Heart left ventricle (tissue), 16 donors: ENCODE measurements at regions of chr18 and their contacts with region 1.

Region 1: DNA sequence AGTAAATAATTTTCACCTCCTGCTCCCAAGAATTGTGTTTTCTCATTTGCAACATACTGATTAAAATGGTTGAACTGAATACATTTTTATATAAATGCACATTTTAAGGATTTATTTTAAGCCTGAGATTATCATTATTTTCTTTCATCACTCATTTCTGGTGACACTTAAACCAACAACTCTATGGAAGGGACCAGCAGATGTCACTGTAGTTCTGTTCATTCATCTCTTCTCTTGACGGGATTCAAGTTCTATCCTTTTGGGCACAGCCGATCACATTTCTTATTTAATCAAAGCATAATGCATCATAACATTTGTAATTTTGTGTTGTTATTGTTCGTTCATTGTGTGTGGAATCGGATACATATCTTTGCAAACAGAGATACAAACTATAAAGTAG is 417.9 kb downstream of the HRH4 start:
- DNase-seq: peak in 1 of 5 donors; percentile 19
- ATAC-seq: peak; percentile 47 to 71 (median 58)
- H3K4me3 ChIP-seq: no peak overlapping the region
- H3K27ac ChIP-seq: no peak overlapping the region
- H3K4me1 ChIP-seq: peaks cover 0 to 5% (median 0%) of the 10 kb centered on the region in 12 donors
- H3K27me3 ChIP-seq: no peaks in the 10 kb centered on the region
- CTCF ChIP-seq: peak; percentile 35 to 80 (median 66)
- POLR2A ChIP-seq: no peak

Region 2: GRCh38 chr18:25230658-25231326 is 352.5 kb after region 1 on chr18:
- intact Hi-C with region 1: loop called in 3 of 10 experiments (anchors 10 kb)
- DNase-seq: peak; percentile 72 to 85 (median 79)
- ATAC-seq: peak; percentile 75 to 92 (median 87)
- H3K4me3 ChIP-seq: peak overlapping the region in 3 of 12 donors; percentile 2 to 27 (median 3)
- H3K27ac ChIP-seq: peak overlapping the region; percentile 43 to 74 (median 64)
- H3K4me1 ChIP-seq: peaks cover 6 to 73% (median 46%) of the 10 kb centered on the region in 12 donors
- H3K27me3 ChIP-seq: no peaks in the 10 kb centered on the region
- CTCF ChIP-seq: no peak
- POLR2A ChIP-seq: no peak

Region 3: GRCh38 chr18:25360301-25360899 is 482.1 kb after region 1 on chr18:
- intact Hi-C with region 1: loop called in 5 of 10 experiments (anchors 2 to 10 kb)
- DNase-seq: no peak
- ATAC-seq: no peak
- H3K4me3 ChIP-seq: no peak overlapping the region
- H3K27ac ChIP-seq: no peak overlapping the region
- H3K4me1 ChIP-seq: no peaks in the 10 kb centered on the region
- H3K27me3 ChIP-seq: no peaks in the 10 kb centered on the region
- CTCF ChIP-seq: no peak
- POLR2A ChIP-seq: no peak

Region 4: GRCh38 chr18:25503567-25504081 is 625.3 kb after region 1 on chr18:
- intact Hi-C with region 1: loop called in 1 of 10 experiments (anchors 10 kb)
- DNase-seq: peak; percentile 46 to 64 (median 51)
- ATAC-seq: peak; percentile 93 to 98 (median 96)
- H3K4me3 ChIP-seq: peak overlapping the region; percentile 8 to 60 (median 45)
- H3K27ac ChIP-seq: peak overlapping the region in 3 of 12 donors; percentile 14 to 30 (median 18)
- H3K4me1 ChIP-seq: peaks cover 0 to 5% (median 0%) of the 10 kb centered on the region in 12 donors
- H3K27me3 ChIP-seq: no peaks in the 10 kb centered on the region
- CTCF ChIP-seq: no peak
- POLR2A ChIP-seq: no peak

Region 5: GRCh38 chr18:25669741-25670140 is 791.5 kb after region 1 on chr18:
- intact Hi-C with region 1: loop called in 5 of 10 experiments (anchors 2 to 10 kb)
- DNase-seq: no peak
- ATAC-seq: no peak
- H3K4me3 ChIP-seq: no peak overlapping the region
- H3K27ac ChIP-seq: no peak overlapping the region
- H3K4me1 ChIP-seq: peaks cover 0 to 3% (median 0%) of the 10 kb centered on the region in 12 donors
- H3K27me3 ChIP-seq: no peaks in the 10 kb centered on the region
- CTCF ChIP-seq: peak in 7 of 12 donors; percentile 8 to 30 (median 19)
- POLR2A ChIP-seq: no peak

Region 6: GRCh38 chr18:25832001-25832604 is 953.8 kb after region 1 on chr18:
- intact Hi-C with region 1: loop called (anchors 2 to 5 kb)
- DNase-seq: peak; percentile 43 to 77 (median 65)
- ATAC-seq: peak; percentile 79 to 90 (median 86)
- H3K4me3 ChIP-seq: no peak overlapping the region
- H3K27ac ChIP-seq: no peak overlapping the region
- H3K4me1 ChIP-seq: peaks cover 0 to 12% (median 0%) of the 10 kb centered on the region in 12 donors
- H3K27me3 ChIP-seq: no peaks in the 10 kb centered on the region
- CTCF ChIP-seq: peak; percentile 60 to 83 (median 70)
- POLR2A ChIP-seq: no peak

Region 7: GRCh38 chr18:25896178-25896780 is 1018.0 kb after region 1 on chr18:
- intact Hi-C with region 1: loop called in 8 of 10 experiments (anchors 1 to 5 kb)
- DNase-seq: peak in 1 of 5 donors; percentile 13
- ATAC-seq: peak in 2 of 4 donors; percentile 30 to 67
- H3K4me3 ChIP-seq: no peak overlapping the region
- H3K27ac ChIP-seq: no peak overlapping the region
- H3K4me1 ChIP-seq: no peaks in the 10 kb centered on the region
- H3K27me3 ChIP-seq: no peaks in the 10 kb centered on the region
- CTCF ChIP-seq: peak; percentile 59 to 83 (median 70)
- POLR2A ChIP-seq: no peak